ENCODE measurements at regions of chr7 and their contacts with region 1.

Region 1: GRCh38 chr7:141654551-141654950 is 47.4 kb downstream of the DENND11 start:
- DNase-seq: peak in 8 of 9 donors; percentile 44 to 79 (median 71)
- ATAC-seq: peak; percentile 96
- H3K4me3 ChIP-seq: no peak overlapping the region
- H3K4me3 Mint-ChIP-seq: no peak overlapping the region
- H3K27ac ChIP-seq: no peak overlapping the region
- H3K27ac Mint-ChIP-seq: peak overlapping the region; percentile 5 to 81 (median 41)
- H3K4me1 ChIP-seq: no peaks in the 10 kb centered on the region
- H3K4me1 Mint-ChIP-seq: peaks cover 5 to 11% (median 11%) of the 10 kb centered on the region in 7 donors
- H3K27me3 ChIP-seq: no peaks in the 10 kb centered on the region
- H3K27me3 Mint-ChIP-seq: no peaks in the 10 kb centered on the region

Region 2: GRCh38 chr7:141674702-141675101 is 20.2 kb after region 1 on chr7:
- CTCF ChIA-PET with region 1: interaction called, 5 read pairs
- POLR2A ChIA-PET with region 1: no interaction called
- intact Hi-C with region 1: loop called in 1 of 2 experiments (anchors 2 kb)
- DNase-seq: no peak
- ATAC-seq: peak; percentile 37
- H3K4me3 ChIP-seq: no peak overlapping the region
- H3K4me3 Mint-ChIP-seq: peak overlapping the region in 1 of 10 donors; percentile 46
- H3K27ac ChIP-seq: no peak overlapping the region
- H3K27ac Mint-ChIP-seq: peak overlapping the region in 5 of 9 donors; percentile 12 to 87 (median 51)
- H3K4me1 ChIP-seq: no peaks in the 10 kb centered on the region
- H3K4me1 Mint-ChIP-seq: peaks cover 0 to 45% (median 0%) of the 10 kb centered on the region in 7 donors
- H3K27me3 ChIP-seq: no peaks in the 10 kb centered on the region
- H3K27me3 Mint-ChIP-seq: no peaks in the 10 kb centered on the region

Region 3: GRCh38 chr7:141701489-141702046 is 47.0 kb after region 1 on chr7:
- CTCF ChIA-PET with region 1: interaction called, 5 read pairs
- POLR2A ChIA-PET with region 1: interaction called, 4 read pairs
- intact Hi-C with region 1: loop called (anchors 2 kb)
- DNase-seq: peak; percentile 50 to 81 (median 76)
- ATAC-seq: peak; percentile 90
- H3K4me3 ChIP-seq: peak overlapping the region; percentile 51
- H3K4me3 Mint-ChIP-seq: peak overlapping the region; percentile 80 to 95 (median 88)
- H3K27ac ChIP-seq: peak overlapping the region; percentile 90
- H3K27ac Mint-ChIP-seq: peak overlapping the region; percentile 77 to 96 (median 88)
- H3K4me1 ChIP-seq: peaks cover 7 to 19% of the 10 kb centered on the region in 2 donors
- H3K4me1 Mint-ChIP-seq: peaks cover 39 to 56% (median 49%) of the 10 kb centered on the region in 7 donors
- H3K27me3 ChIP-seq: no peaks in the 10 kb centered on the region
- H3K27me3 Mint-ChIP-seq: peaks cover 0 to 16% (median 0%) of the 10 kb centered on the region in 5 donors

Region 4: DNA sequence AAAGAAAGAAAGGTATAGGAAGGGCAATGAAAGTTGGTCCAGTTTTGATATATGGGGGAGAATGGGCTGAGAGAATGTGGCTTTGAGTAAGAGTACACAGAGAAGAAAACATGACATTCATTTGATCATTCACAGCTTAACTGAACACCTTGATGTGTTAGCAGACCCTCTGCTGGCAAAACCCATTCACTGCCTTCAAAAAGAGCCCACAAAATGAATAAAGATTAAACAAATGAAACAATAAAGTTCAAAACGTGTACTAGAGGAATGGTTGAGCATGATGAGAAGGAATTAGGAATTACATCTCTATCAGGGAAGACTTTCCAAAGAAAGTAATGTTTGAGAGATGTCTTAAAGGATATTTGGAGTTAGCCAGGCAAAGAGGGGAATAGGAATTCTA is 55.8 kb after region 1 on chr7:
- CTCF ChIA-PET with region 1: interaction called, 7 read pairs
- POLR2A ChIA-PET with region 1: no interaction called
- intact Hi-C with region 1: loop called in 1 of 2 experiments (anchors 1 kb)
- DNase-seq: peak in 1 of 9 donors; percentile 14
- ATAC-seq: no peak
- H3K4me3 ChIP-seq: no peak overlapping the region
- H3K4me3 Mint-ChIP-seq: no peak overlapping the region
- H3K27ac ChIP-seq: no peak overlapping the region
- H3K27ac Mint-ChIP-seq: no peak overlapping the region
- H3K4me1 ChIP-seq: no peaks in the 10 kb centered on the region
- H3K4me1 Mint-ChIP-seq: peaks cover 0 to 9% (median 0%) of the 10 kb centered on the region in 7 donors
- H3K27me3 ChIP-seq: no peaks in the 10 kb centered on the region
- H3K27me3 Mint-ChIP-seq: peaks cover 0 to 2% (median 0%) of the 10 kb centered on the region in 5 donors

Region 5: GRCh38 chr7:141785706-141786552 is 131.4 kb after region 1 on chr7:
- CTCF ChIA-PET with region 1: interaction called, 21 read pairs
- POLR2A ChIA-PET with region 1: no interaction called
- intact Hi-C with region 1: loop called (anchors 1 kb)
- DNase-seq: peak in 5 of 9 donors; percentile 24 to 40 (median 33)
- ATAC-seq: peak; percentile 57
- H3K4me3 ChIP-seq: no peak overlapping the region
- H3K4me3 Mint-ChIP-seq: no peak overlapping the region
- H3K27ac ChIP-seq: no peak overlapping the region
- H3K27ac Mint-ChIP-seq: peak overlapping the region in 1 of 9 donors; percentile 4
- H3K4me1 ChIP-seq: no peaks in the 10 kb centered on the region
- H3K4me1 Mint-ChIP-seq: peaks cover 0 to 5% (median 0%) of the 10 kb centered on the region in 7 donors
- H3K27me3 ChIP-seq: no peaks in the 10 kb centered on the region
- H3K27me3 Mint-ChIP-seq: no peaks in the 10 kb centered on the region

Region 6: DNA sequence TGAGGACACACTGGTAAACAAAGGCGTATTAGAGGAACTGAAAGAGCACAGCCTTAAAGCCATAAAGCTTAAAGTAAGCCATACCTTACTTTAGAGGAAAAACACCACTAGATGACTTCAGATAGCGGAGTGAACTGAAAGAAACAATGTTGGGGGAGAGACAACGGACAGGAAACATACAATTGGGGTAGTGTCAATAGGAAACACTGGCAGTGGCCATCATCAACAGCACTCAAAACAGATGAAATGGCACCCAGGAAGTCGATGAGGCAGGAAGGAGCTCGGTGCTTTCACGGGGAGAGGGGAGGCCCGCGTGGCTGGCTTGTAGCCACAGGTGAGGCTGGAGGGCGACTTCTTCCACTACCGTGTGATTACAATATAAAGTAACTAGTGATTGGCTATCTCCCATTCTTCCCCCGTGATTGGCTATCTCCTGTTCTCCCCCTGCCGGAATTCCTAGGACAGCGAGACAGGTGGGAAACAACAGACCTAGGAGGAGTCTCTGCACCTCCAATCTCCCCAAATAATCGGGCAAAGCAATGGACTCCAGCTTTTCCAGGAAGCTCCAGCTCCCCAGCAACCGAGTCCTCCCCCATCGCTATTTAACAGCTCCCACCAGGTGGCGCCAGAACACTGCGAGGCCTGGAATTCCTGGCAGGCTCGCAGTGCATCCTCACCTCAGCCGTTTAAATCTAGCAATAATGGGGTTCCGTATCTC is 321.4 kb after region 1 on chr7:
- CTCF ChIA-PET with region 1: no interaction called
- POLR2A ChIA-PET with region 1: no interaction called
- intact Hi-C with region 1: loop called in 1 of 2 experiments (anchors 5 kb)
- DNase-seq: peak; percentile 31 to 72 (median 59)
- ATAC-seq: peak; percentile 84
- H3K4me3 ChIP-seq: peak overlapping the region; percentile 73
- H3K4me3 Mint-ChIP-seq: peak overlapping the region; percentile 57 to 88 (median 82)
- H3K27ac ChIP-seq: no peak overlapping the region
- H3K27ac Mint-ChIP-seq: peak overlapping the region in 8 of 9 donors; percentile 38 to 91 (median 76)
- H3K4me1 ChIP-seq: peaks cover 0 to 12% of the 10 kb centered on the region in 2 donors
- H3K4me1 Mint-ChIP-seq: peaks cover 6 to 29% (median 13%) of the 10 kb centered on the region in 7 donors
- H3K27me3 ChIP-seq: no peaks in the 10 kb centered on the region
- H3K27me3 Mint-ChIP-seq: no peaks in the 10 kb centered on the region

Region 7: GRCh38 chr7:142301923-142302550 is 647.5 kb after region 1 on chr7:
- CTCF ChIA-PET with region 1: no interaction called
- POLR2A ChIA-PET with region 1: no interaction called
- intact Hi-C with region 1: loop called in 1 of 2 experiments (anchors 5 kb)
- DNase-seq: peak in 1 of 9 donors; percentile 34
- ATAC-seq: no peak
- H3K4me3 ChIP-seq: no peak overlapping the region
- H3K4me3 Mint-ChIP-seq: peak overlapping the region in 2 of 10 donors; percentile 17 to 49
- H3K27ac ChIP-seq: no peak overlapping the region
- H3K27ac Mint-ChIP-seq: no peak overlapping the region
- H3K4me1 ChIP-seq: peaks cover 0 to 28% of the 10 kb centered on the region in 2 donors
- H3K4me1 Mint-ChIP-seq: peaks cover 7 to 52% (median 35%) of the 10 kb centered on the region in 7 donors
- H3K27me3 ChIP-seq: no peaks in the 10 kb centered on the region
- H3K27me3 Mint-ChIP-seq: peaks cover 4 to 25% (median 16%) of the 10 kb centered on the region in 5 donors